ENCODE measurements at regions of chr18 and their contacts with region 1.

Region 1: DNA sequence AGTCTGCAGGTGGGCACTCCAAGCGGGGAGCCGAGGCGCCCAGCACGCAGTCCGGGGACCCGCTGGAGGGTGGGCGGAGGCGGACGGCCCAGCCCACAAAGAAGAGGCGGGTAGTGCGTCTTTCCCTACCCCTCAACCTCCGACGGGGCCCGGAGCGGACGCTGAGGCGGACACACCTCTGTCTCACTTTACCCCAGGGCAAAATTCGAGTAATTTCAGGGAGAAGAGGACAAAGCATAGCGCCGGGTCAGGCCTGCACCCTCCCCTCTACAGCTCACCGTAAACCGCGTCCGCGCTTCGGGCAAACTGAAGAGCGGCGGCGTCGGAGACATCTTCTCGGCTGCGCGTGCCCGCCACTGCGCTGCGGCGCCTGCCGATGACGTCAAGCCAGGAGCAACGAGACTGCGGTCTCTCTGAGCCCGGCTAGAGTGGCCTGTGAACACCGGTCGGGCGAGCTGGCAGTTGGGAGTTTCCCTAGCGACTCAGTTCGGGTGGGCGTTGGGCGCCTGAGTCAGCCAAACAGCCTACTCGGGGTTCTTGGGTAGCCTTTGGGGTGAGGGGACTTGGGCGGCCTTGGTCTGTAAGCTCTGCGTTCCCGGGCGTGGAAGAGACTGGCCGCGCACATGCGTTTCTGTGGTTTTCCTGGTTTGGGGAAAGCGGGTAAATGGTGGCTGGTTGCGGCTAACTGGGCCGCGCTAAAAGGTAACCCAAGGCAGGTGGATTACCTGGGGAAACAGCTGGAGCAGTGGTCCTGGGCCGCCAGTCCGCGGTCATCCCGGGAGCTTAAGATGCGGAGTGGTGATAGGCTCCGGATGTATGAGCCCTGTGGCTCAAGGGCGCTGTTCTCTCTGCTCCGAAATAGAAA is at the start of gene THOC1:
- DNase-seq: peak; percentile 93
- H3K4me3 Mint-ChIP-seq: peak within 1 kb of the TSS; percentile 98
- H3K27ac Mint-ChIP-seq: peak within 1 kb of the TSS; percentile 100
- H3K4me1 Mint-ChIP-seq: peaks cover 19% of the 10 kb centered on the region
- H3K27me3 Mint-ChIP-seq: no peaks in the 10 kb centered on the region
- total RNA-seq, gene THOC1: 70.6 and 72.8 TPM in 2 replicates

Region 2: DNA sequence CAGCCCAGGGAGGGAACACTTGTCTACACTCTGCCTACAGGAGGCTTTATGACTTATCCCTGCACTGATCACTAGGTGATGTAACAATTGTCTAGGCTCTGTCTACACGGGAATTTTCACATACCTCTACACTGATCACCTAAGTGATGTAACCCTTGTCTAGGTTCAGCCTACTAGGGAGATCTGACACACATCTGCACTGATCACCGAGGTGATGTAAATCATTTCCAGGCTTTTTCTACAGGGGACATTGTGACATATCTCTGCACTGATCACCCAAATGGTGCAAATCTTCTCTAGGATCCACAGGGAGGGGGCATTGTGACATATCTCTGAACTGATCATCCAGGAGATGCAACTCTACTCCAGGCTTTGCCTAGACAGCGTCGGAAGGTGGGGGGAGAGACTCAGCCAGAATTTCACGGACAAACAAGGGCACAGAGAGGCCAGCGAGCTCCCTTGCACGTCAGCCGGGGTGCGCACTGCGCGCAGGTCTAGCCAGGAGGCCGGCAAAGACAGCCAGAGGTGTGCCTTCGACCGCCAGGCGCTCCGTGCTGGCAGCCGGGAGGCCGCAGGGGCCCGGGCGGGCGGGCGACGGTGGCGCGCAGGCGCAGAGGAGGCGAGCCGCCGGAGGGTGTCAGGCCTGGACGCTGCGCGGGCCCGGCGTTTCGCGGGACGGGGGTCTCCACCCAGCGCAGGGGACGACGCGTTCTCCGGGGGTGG is 156.5 kb before region 1 on chr18:
- intact Hi-C with region 1: loop called (anchors 5 kb)
- DNase-seq: peak; percentile 62
- H3K4me3 Mint-ChIP-seq: peak overlapping the region; percentile 74
- H3K27ac Mint-ChIP-seq: peak overlapping the region; percentile 34
- H3K4me1 Mint-ChIP-seq: peaks cover 9% of the 10 kb centered on the region
- H3K27me3 Mint-ChIP-seq: peaks cover 9% of the 10 kb centered on the region

Region 3: DNA sequence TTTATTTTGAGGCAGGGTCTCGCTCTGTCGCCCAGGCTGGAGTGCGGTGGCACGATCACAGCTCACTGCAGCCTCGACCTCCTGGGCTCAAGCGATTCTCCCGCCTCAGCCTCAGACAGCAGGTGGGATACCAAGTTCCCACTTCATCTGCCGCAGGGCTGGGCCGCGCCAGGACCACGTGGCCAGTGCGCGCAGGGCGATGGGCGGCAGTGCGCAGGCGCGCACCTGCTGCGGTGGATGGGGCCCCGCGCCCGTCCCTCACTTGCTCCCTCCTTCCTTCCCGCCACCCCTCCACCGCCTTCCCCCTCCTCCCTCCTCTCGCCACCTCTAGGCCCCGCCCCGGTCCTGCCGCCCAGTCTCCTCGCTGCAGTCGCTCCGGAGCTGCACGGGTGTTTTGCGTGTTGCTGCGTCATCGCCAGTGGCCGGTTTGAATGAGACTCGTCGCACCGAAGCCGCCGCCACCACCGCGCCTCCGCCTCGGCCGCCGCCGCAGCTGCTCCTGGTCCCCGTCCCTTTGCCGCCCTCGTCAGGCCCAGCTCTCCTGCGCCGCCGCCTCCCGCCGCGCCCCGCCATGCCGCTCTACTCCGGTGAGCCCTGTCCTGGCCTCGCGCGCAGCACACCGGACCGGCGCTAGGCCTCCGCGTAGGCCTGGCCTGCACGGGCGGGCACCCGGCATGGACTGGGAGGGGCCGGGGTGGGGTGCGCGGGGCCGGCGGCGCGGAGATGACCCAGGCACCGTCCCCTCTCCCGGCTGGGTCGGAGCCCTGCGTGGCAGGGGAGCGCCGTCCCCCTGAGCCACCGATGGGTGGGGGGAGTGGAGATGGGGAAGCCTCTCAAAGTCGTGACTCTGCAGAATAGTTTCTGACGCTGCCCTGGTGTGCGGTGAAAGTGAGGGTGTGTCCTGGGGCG is 109.5 kb before region 1 on chr18 and contains the start of gene USP14:
- intact Hi-C with region 1: loop called (anchors 1 kb)
- DNase-seq: peak; percentile 96
- H3K4me3 Mint-ChIP-seq: peak within 1 kb of the TSS; percentile 96
- H3K27ac Mint-ChIP-seq: peak within 1 kb of the TSS; percentile 89
- H3K4me1 Mint-ChIP-seq: peaks cover 19% of the 10 kb centered on the region
- H3K27me3 Mint-ChIP-seq: no peaks in the 10 kb centered on the region
- total RNA-seq, gene USP14: 89.7 and 98.4 TPM in 2 replicates

Region 4: DNA sequence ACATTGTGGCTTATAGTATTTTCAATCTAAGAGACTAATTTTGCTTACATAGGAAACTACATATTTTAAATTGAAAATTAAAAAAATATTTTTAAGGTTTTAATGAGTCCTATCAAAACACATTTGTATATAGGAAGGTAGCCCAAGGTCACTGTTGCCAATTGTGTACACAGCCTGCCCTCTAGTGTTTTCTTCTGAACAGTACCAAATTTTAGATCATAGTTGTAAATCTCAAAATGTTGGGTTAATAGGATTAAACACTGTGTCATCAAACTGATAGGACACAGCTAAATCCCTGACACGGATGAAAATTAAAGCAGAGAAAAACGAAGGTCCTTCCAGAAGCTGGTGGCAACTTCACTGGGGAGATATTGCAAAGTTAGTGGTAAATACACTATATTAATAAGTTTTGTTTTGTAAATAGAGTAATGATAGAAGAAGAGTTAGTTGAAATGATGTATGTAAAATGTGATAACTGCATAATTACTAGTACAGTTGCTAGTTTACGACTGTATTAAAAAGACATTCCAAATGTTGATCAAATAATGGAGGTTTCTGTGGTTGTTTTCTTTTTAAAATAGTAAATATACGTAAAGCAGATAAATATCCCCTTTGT is 348.6 kb after region 1 on chr18:
- intact Hi-C with region 1: loop called (anchors 10 kb)
- DNase-seq: no peak
- H3K4me3 Mint-ChIP-seq: no peak overlapping the region
- H3K27ac Mint-ChIP-seq: no peak overlapping the region
- H3K4me1 Mint-ChIP-seq: no peaks in the 10 kb centered on the region
- H3K27me3 Mint-ChIP-seq: peaks cover 24% of the 10 kb centered on the region

Measured in activated T-helper 2 cell treated with anti-CD3 and anti-CD28 coated beads, Interferon-gamma antibody, Interleukin-2, Interleukin-4, amounts not matched to agents 10 μg/mL and 5 μg/mL and 100 μg/mL, durations not matched to agents 14 hours and 24 hours and 36 hours (primary cell).